ENCODE measurements at regions of chr4 and their contacts with region 1.

Region 1: GRCh38 chr4:23084559-23085248 is 392.0 kb downstream of the GBA3 start:
- DNase-seq: no peak
- ATAC-seq: peak; percentile 92
- H3K4me3 ChIP-seq: no peak overlapping the region
- H3K27ac ChIP-seq: no peak overlapping the region
- H3K4me1 ChIP-seq: no peaks in the 10 kb centered on the region
- H3K27me3 ChIP-seq: no peaks in the 10 kb centered on the region
- CTCF ChIP-seq: no peak
- EP300 ChIP-seq: peak; percentile 2 to 33; a peak in 1 of 4 replicates
- POLR2A ChIP-seq: no peak
- RAD21 ChIP-seq: no peak

Region 2: DNA sequence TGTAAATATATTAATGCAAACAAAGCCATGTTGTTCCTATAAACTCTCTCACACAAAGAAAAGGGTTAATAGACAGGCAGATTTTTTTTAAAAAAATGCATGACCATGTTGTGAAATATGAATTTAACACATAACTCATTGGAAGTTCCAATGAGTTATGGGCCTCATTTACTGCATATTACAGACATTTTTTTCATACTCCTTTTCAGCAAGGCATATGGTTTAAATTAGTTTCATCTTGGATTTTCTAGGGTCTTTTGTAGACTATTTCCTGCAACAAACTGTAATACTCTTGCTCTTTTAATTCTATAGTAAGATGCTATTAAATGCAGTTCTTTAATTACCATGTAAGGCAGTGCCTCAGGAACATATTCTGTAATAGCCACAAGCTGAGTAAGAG is 68.9 kb before region 1 on chr4:
- CTCF ChIA-PET with region 1: no interaction called
- POLR2A ChIA-PET with region 1: no interaction called
- RAD21 ChIA-PET with region 1: no interaction called
- SMC1A ChIA-PET with region 1: no interaction called
- in situ Hi-C with region 1: no loop called
- intact Hi-C with region 1: no loop called
- DNase-seq: no peak
- ATAC-seq: no peak
- H3K4me3 ChIP-seq: no peak overlapping the region
- H3K27ac ChIP-seq: no peak overlapping the region
- H3K4me1 ChIP-seq: no peaks in the 10 kb centered on the region
- H3K27me3 ChIP-seq: no peaks in the 10 kb centered on the region
- CTCF ChIP-seq: no peak
- EP300 ChIP-seq: no peak
- POLR2A ChIP-seq: no peak
- RAD21 ChIP-seq: no peak

Region 3: DNA sequence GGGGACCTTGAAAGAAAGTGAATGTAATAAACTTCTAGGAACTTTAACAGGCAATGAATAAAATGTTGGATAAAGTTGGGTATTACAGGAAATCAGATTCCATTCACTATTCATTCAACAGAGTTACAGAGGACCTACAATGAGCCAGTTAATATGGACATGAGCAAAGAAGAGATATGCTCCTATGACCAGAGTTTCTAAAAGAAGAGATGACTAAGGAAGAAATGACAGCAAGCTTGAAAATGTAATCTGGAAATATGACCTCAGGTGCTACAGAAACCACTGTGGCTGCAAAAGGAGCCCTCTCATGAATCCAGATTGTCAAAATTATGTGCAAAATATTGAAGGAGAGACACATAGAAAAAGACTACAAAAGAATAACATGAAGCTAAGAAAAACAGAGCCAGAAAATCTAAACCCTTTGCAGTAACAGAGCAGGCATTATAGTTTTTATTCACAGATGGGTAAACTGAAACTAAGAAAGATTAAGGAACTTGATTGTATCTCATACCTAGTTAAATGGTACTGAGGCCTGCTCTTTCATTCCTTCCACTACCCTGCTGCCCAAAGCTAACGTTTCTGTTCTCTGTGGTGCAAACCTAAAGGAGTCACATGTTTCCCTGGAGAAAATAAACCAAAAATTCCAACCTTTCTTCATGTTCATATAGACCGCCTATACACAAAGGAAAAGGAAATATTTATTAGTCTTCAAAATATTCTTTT is 13.7 kb before region 1 on chr4:
- CTCF ChIA-PET with region 1: interaction called, 3 read pairs
- POLR2A ChIA-PET with region 1: interaction called, 10 read pairs
- RAD21 ChIA-PET with region 1: interaction called, 6 read pairs
- SMC1A ChIA-PET with region 1: interaction called, 19 read pairs
- in situ Hi-C with region 1: no loop called
- intact Hi-C with region 1: no loop called
- DNase-seq: no peak
- ATAC-seq: peak; percentile 58
- H3K4me3 ChIP-seq: no peak overlapping the region
- H3K27ac ChIP-seq: no peak overlapping the region
- H3K4me1 ChIP-seq: no peaks in the 10 kb centered on the region
- H3K27me3 ChIP-seq: no peaks in the 10 kb centered on the region
- CTCF ChIP-seq: no peak
- EP300 ChIP-seq: no peak
- POLR2A ChIP-seq: no peak
- RAD21 ChIP-seq: no peak

Region 4: GRCh38 chr4:23114538-23114937 is 29.8 kb after region 1 on chr4:
- CTCF ChIA-PET with region 1: interaction called, 3 read pairs
- POLR2A ChIA-PET with region 1: interaction called, 3 read pairs
- RAD21 ChIA-PET with region 1: interaction called, 7 read pairs
- SMC1A ChIA-PET with region 1: interaction called, 12 read pairs
- in situ Hi-C with region 1: no loop called
- intact Hi-C with region 1: no loop called
- DNase-seq: no peak
- ATAC-seq: peak; percentile 78
- H3K4me3 ChIP-seq: no peak overlapping the region
- H3K27ac ChIP-seq: no peak overlapping the region
- H3K4me1 ChIP-seq: no peaks in the 10 kb centered on the region
- H3K27me3 ChIP-seq: no peaks in the 10 kb centered on the region
- CTCF ChIP-seq: no peak
- EP300 ChIP-seq: no peak
- POLR2A ChIP-seq: no peak
- RAD21 ChIP-seq: no peak

Region 5: DNA sequence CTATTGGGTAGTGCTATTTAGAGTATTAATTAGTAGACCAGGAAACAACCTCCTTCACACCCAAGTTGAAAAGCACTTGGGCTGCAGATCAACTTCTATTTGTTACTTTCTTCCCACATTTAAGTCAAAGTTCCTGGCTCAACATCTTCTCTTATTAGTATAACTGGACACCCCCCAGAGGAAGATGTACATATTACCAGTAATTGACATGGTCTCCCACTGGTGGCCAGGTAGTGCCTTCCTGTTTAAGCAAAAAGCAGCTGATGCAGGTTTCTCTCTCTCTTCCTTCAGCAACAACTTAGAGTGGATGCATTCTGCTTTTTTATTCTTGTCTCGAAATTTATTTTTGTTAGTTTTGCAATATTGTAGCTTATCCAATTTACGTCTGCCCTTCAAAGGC is 46.1 kb after region 1 on chr4:
- CTCF ChIA-PET with region 1: interaction called, 3 read pairs
- POLR2A ChIA-PET with region 1: no interaction called
- RAD21 ChIA-PET with region 1: no interaction called
- SMC1A ChIA-PET with region 1: interaction called, 11 read pairs
- in situ Hi-C with region 1: no loop called
- intact Hi-C with region 1: no loop called
- DNase-seq: no peak
- ATAC-seq: peak; percentile 68
- H3K4me3 ChIP-seq: no peak overlapping the region
- H3K27ac ChIP-seq: no peak overlapping the region
- H3K4me1 ChIP-seq: no peaks in the 10 kb centered on the region
- H3K27me3 ChIP-seq: no peaks in the 10 kb centered on the region
- CTCF ChIP-seq: 0 out of 6 replicates have a peak, but pooled peaks of 1 of the 3 experiments have one; percentile 5
- EP300 ChIP-seq: no peak
- POLR2A ChIP-seq: no peak
- RAD21 ChIP-seq: no peak

Measured in GM12878 (cell line).